Activated T-helper 1 cell treated with anti-CD3 and anti-CD28 coated beads, Interleukin-12 subunit alpha, Interleukin-12 subunit beta, Interleukin-2, Interleukin-4 antibody, amounts not matched to agents 30 ng/mL and 10 ng/mL and 1 ng/mL, durations not matched to agents 14 hours and 24 hours and 36 hours (primary cell): ENCODE measurements at regions of chr2 and their contacts with region 1.

Region 1: DNA sequence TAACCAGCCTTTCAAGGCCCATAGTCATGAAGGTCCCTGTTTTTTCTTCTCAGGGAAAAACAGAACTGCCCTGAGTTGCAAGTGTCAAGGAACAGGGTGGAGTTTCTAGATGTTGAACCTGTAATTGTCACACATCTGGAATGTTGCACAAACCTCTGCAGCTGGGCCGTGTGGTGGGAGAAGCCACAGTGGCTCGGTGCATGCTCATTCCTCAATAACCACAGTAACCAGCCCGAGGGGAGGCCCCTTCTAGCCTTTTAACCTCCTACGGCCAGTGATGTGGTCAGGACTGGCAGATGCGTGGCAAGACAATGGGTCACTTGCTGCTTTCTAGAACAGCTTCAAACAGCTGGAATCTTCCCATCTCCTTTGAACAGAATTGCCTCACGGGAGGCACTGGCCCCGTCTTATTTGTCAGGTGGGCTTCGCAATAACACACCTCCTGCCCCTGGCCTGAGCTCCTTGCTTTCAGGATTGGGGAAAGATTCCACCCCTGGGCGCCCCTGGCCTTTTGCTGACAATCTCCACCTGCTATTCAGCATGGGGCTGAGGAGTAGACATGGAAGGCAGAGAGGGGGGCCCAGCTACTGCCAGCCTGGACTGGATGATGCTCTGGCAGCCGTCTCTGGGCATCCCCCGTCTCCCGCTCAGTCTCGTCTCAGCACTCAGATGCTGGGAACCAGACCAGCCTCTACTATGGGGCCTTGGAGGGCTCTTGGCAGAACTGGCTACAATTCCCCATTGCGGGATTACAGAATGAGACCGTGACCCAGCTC is 102.9 kb downstream of the KLHL29 start:
- DNase-seq: no peak
- H3K4me3 Mint-ChIP-seq: peak overlapping the region; percentile 62
- H3K27ac Mint-ChIP-seq: peak overlapping the region; percentile 78
- H3K4me1 Mint-ChIP-seq: peaks cover 59% of the 10 kb centered on the region
- H3K27me3 Mint-ChIP-seq: peaks cover 8% of the 10 kb centered on the region

Region 2: GRCh38 chr2:23384551-23385349 is 103.2 kb before region 1 on chr2 and contains the start of gene KLHL29:
- intact Hi-C with region 1: loop called (anchors 2 kb)
- DNase-seq: peak; percentile 66
- H3K4me3 Mint-ChIP-seq: peak within 1 kb of the TSS; percentile 90
- H3K27ac Mint-ChIP-seq: peak within 1 kb of the TSS; percentile 66
- H3K4me1 Mint-ChIP-seq: peaks cover 18% of the 10 kb centered on the region
- H3K27me3 Mint-ChIP-seq: peaks cover 65% of the 10 kb centered on the region
- total RNA-seq, gene KLHL29: 2.8 and 3.3 TPM in 2 replicates

Region 3: GRCh38 chr2:23436346-23437098 is 51.4 kb before region 1 on chr2:
- intact Hi-C with region 1: loop called (anchors 2 kb)
- DNase-seq: peak; percentile 25
- H3K4me3 Mint-ChIP-seq: no peak overlapping the region
- H3K27ac Mint-ChIP-seq: no peak overlapping the region
- H3K4me1 Mint-ChIP-seq: peaks cover 20% of the 10 kb centered on the region
- H3K27me3 Mint-ChIP-seq: peaks cover 23% of the 10 kb centered on the region

Region 4: GRCh38 chr2:23452853-23453420 is 35.0 kb before region 1 on chr2:
- intact Hi-C with region 1: loop called (anchors 5 kb)
- DNase-seq: no peak
- H3K4me3 Mint-ChIP-seq: peak overlapping the region; percentile 35
- H3K27ac Mint-ChIP-seq: peak overlapping the region; percentile 11
- H3K4me1 Mint-ChIP-seq: peaks cover 33% of the 10 kb centered on the region
- H3K27me3 Mint-ChIP-seq: peaks cover 12% of the 10 kb centered on the region

Region 5: DNA sequence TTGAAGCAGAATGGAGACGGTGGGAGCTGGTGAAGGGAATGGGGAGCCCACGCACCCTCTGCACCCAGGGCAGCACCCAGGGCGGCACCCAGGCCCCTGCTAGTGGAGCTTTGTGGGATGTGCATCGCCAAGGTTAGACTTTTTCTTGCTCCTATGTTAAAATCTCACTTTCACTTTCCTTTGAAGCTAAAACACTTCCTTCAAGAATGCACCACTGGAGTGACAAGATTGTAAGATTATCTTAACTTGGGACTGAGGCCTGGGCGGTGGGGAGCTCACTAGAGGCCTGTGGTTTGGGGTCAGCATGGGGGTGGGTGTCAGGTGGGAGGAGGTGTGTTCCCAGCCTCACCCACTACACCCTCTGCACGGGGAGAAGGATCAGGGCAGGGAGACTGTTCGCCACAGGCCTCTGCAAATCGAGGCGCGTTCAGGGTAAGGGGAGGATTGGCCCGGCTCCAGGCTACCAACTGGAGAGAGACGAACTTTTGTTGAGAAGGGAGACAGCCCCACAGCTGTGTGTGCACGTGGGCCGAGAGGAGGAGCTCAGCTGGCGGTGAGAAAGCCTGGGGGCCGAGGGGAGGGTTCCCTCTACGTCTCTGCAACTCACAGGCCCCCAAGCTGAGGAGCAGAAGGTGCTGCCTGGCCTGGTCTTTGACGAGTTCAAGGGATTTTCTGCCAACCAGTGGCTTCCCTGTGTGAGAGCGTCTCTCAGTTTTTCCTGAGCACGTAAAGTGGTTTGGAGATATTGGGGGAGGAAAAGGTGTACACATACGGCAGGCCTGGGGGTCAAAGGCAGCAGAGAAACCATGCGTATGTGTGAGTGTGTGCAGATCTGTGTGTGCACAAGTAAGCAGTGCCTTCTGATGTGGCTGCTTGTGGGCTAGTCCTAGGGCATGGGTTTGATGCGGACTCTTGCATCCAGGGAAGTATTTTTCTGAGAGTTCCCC is 44.7 kb after region 1 on chr2:
- intact Hi-C with region 1: loop called (anchors 2 kb)
- DNase-seq: peak; percentile 21
- H3K4me3 Mint-ChIP-seq: peak overlapping the region; percentile 74
- H3K27ac Mint-ChIP-seq: peak overlapping the region; percentile 89
- H3K4me1 Mint-ChIP-seq: peaks cover 32% of the 10 kb centered on the region
- H3K27me3 Mint-ChIP-seq: peaks cover 6% of the 10 kb centered on the region

Region 6: DNA sequence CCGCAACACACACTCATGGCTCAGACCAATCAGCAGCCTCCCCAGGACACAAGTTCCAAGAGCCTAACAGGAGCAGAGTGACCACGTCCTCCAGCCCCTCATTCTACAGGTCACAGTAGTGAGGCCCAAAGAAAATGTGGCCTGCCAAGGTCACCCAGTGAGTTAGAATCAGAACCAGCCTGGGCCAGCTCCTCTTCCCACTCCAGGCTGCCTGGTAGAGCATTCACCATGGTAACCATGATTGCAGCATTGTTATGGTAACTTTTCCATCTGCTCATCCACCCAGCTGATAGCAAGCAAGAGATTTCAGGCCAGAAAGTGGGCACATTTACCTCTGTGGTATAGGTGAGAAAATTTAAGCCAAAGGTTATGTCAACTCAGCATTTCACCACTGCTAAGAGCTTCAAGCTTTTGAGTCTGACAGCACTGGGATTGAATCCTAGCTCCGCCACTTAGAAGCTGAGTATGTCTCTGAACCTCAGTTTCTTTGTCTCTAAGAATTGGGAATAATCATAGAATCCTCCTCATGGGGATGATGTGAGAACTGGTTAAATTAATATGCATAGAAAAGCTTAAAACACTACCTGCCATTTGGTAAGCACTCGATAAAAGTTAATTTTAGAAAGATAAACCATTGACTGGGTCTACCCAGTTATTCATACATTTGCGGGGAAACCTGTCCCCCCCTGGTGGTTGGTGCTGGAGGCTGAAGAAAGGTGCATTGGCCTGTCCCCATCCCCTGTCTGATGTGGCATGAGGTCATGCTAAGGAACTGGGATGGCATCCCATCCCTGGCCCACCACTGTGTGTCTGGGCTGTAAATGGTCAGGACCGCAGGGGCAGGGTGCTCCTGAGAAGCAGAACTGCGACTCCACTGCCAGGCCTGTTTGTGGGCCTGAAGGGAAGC is 78.6 kb after region 1 on chr2:
- intact Hi-C with region 1: loop called (anchors 1 kb)
- DNase-seq: no peak
- H3K4me3 Mint-ChIP-seq: no peak overlapping the region
- H3K27ac Mint-ChIP-seq: no peak overlapping the region
- H3K4me1 Mint-ChIP-seq: no peaks in the 10 kb centered on the region
- H3K27me3 Mint-ChIP-seq: peaks cover 2% of the 10 kb centered on the region